ENCODE measurements at regions of chr7 and their contacts with region 1.

Region 1: DNA sequence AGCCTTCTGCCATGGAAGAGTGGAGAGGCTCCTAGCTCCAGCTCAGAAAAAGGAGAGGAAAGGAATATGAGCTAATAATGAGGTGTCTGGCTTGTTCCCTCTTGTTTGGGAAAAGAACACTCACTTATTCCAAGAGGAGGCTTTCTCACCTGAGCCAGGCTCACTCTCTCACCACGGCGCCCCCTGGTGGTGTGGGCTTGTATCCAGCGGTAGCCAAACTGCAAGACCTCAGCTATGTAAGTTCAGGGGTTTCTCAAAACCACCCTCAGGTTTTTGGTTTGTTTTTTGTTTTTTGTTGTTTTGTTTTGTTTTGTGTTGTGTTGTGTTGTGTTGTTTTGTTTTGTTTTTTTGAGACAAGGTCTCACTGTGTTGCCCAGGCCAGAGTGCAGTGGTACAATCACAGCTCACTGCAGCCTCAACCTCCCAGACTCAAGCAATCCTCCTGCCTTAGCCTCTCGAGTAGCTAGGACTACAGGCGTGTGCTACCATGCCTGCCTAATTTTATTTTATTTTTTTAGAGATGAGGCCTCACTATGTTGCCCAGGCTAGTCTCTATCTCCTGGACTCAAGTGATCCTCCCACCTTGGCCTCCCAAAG is 124.0 kb downstream of the TMEM130 start:
- DNase-seq: peak; percentile 72
- H3K4me3 ChIP-seq: no peak overlapping the region
- H3K27ac ChIP-seq: no peak overlapping the region
- H3K4me1 ChIP-seq: no peaks in the 10 kb centered on the region
- H3K27me3 ChIP-seq: peaks cover 15% of the 10 kb centered on the region; the same call in 1 of the 2 replicates

Region 2: GRCh38 chr7:98280791-98281756 is 464.7 kb before region 1 on chr7 and contains the start of gene BRI3:
- in situ Hi-C with region 1: loop called (anchors 25 kb)
- DNase-seq: peak; percentile 96
- H3K4me3 ChIP-seq: peak within 1 kb of the TSS; percentile 86
- H3K27ac ChIP-seq: peak within 1 kb of the TSS; percentile 89
- H3K4me1 ChIP-seq: peaks cover 15% of the 10 kb centered on the region
- H3K27me3 ChIP-seq: no peaks in the 10 kb centered on the region
- total RNA-seq, gene BRI3: 56.5 and 73.3 TPM in 2 replicates

Measured in GM23248 (cell line).